ENCODE measurements at regions of chr10 and their contacts with region 1.

Region 1: DNA sequence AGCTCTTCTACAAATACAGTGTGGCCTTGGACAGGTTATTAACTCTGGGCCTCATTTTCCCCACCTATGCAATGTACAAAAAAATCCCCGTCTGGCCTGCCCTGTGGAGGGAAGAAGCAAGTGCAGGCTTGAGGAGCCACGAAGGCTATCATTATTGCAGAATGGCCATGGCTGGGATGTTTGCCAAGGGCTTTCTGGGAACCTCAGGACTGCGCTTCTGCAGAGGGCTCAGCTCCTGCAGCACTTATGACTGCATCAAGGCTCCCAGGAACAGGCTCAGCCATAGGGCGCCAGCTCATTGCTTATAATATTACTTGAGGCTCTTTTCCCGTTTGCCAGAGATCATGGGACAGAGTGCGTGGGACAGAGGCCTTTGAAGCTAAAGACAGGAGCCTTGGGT is 20.5 kb upstream of the C10orf105 start:
- DNase-seq: no peak
- H3K4me3 Mint-ChIP-seq: no peak overlapping the region
- H3K27ac Mint-ChIP-seq: peak overlapping the region; percentile 98
- H3K4me1 Mint-ChIP-seq: peaks cover 99% of the 10 kb centered on the region
- H3K27me3 Mint-ChIP-seq: no peaks in the 10 kb centered on the region

Region 2: DNA sequence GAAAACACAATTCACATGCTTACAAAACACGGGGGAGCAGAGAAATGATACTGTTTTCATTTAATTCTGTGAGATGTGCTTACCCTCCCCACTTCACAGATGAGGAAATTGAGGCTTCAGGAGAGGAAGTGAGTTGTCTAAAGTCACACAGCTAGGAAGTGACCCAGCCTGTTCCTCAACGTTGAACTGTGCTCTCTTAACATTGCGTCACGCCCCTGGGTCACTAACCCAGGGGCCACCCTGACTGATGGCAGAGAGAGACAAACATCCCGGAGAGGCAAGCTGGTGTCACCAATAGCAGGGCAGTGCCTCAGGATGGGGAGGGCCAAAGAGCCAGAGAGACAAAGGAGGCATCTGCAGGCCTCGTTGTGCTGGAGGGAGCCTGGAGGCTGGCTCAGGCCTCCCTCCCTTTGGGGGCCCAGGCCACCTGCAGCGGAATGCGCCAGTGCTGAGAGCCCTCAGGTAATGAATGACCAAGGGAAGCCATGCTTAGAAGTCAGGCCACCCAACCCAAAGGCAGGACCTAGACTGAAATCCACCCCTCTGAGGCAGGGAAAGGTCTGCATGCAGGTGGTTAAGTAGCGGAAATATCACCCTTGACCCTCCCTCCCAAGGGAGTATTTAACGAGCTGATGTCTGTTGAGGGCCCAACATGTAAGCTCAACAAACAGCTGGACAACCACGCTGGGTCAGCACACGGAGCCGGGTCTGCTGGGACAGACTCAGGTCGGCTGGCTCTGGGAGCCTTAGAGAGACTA is 101.8 kb before region 1 on chr10:
- CTCF ChIA-PET with region 1: no interaction called
- POLR2A ChIA-PET with region 1: no interaction called
- intact Hi-C with region 1: no loop called
- DNase-seq: peak; percentile 13
- H3K4me3 Mint-ChIP-seq: no peak overlapping the region
- H3K27ac Mint-ChIP-seq: no peak overlapping the region
- H3K4me1 Mint-ChIP-seq: peaks cover 3% of the 10 kb centered on the region
- H3K27me3 Mint-ChIP-seq: no peaks in the 10 kb centered on the region

Region 3: GRCh38 chr10:71756311-71757191 is 16.5 kb after region 1 on chr10:
- CTCF ChIA-PET with region 1: interaction called, 9 read pairs
- POLR2A ChIA-PET with region 1: interaction called, 12 read pairs
- intact Hi-C with region 1: no loop called
- DNase-seq: no peak
- H3K4me3 Mint-ChIP-seq: peak overlapping the region; percentile 63
- H3K27ac Mint-ChIP-seq: peak overlapping the region; percentile 95
- H3K4me1 Mint-ChIP-seq: peaks cover 94% of the 10 kb centered on the region
- H3K27me3 Mint-ChIP-seq: no peaks in the 10 kb centered on the region